ENCODE measurements at regions of chr13 and their contacts with region 1.

Region 1: GRCh38 chr13:46817095-46817494 is 20.1 kb upstream of the ESD start:
- DNase-seq: no peak
- H3K4me3 ChIP-seq: no peak overlapping the region
- CTCF ChIP-seq: no peak
- POLR2A ChIP-seq: no peak

Region 2: GRCh38 chr13:46855166-46855565 is 38.1 kb after region 1 on chr13:
- intact Hi-C with region 1: loop called (anchors 1 kb)
- DNase-seq: no peak
- H3K4me3 ChIP-seq: no peak overlapping the region
- CTCF ChIP-seq: no peak
- POLR2A ChIP-seq: no peak

Region 3: DNA sequence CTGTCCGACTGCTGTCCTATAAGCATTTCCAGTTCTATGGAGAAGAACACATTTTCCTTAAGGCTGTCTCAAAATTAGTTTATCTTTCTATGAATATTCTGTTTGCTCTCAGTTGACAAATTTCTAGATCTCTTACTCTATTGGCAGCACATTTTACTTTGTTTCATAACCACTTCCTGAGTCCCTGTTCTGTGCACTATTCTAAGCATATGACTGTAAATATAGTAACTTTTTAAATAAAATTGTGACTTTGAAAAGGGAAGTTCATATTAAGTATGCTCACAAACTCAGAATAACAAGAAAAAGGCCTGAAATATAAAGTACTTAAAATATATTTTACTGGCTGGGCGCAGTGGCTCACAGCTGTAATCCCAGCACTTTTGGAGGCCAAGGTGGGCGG is 136.2 kb after region 1 on chr13:
- intact Hi-C with region 1: no loop called
- DNase-seq: no peak
- H3K4me3 ChIP-seq: no peak overlapping the region
- CTCF ChIP-seq: no peak
- POLR2A ChIP-seq: no peak

Region 4: DNA sequence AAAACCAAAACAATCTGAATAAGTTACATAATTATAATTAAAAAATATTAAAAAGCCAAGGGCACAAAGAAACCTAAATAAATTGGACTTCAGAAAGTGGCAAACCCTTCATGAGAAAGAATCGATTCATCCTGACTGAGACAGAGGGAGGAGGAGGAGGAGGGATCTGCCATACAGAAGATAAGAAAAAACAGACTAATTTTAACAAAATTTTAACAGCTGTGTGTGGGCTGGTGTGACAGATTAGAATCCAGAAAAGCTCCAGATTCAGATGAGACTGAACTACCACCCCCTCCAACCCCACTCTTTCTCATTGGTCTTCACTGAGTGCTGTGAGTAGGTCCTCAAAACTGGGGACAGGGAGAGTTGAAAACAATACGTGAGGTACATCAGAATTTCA is 191.2 kb after region 1 on chr13:
- intact Hi-C with region 1: no loop called
- DNase-seq: no peak
- H3K4me3 ChIP-seq: no peak overlapping the region
- CTCF ChIP-seq: no peak
- POLR2A ChIP-seq: no peak